H1 (cell line): ENCODE measurements at regions of chr2 and their contacts with region 1.

Region 1: GRCh38 chr2:199985625-199986207 is 30.3 kb downstream of the MAIP1 start:
- DNase-seq: peak; percentile 25 to 75
- H3K4me3 ChIP-seq: no peak overlapping the region
- H3K27ac ChIP-seq: no peak overlapping the region
- H3K4me1 ChIP-seq: peaks cover 0 to 16% (median 10%) of the 10 kb centered on the region in 4 experiments; a peak in 5 of 7 replicates
- H3K27me3 ChIP-seq: no peaks in the 10 kb centered on the region
- CTCF ChIP-seq: peak; percentile 65 to 96 (median 70)
- EP300 ChIP-seq: no peak
- POLR2A ChIP-seq: no peak
- RAD21 ChIP-seq: peak; percentile 79 to 83

Region 2: DNA sequence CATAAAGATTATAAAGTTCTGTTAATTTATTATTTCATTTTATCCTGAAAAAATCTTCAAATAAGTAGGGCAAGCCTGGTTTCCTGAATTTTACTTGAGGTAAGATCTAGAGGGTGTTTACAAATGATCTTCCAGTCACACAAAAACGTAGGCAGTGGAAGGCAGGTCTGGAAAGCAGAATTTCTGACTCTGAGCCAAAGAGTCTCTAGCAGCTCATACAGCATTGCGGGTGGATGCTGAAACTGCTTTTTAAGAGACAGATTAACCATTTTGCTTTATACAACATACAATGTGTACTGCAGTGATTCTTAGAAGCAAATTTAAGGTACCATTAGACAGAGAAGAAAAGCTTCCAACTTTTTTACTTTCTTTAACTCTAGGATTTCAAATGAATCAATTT is 251.7 kb before region 1 on chr2:
- CTCF ChIA-PET with region 1: no interaction called
- POLR2A ChIA-PET with region 1: no interaction called
- DNase-seq: no peak
- H3K4me3 ChIP-seq: no peak overlapping the region
- H3K27ac ChIP-seq: no peak overlapping the region
- H3K4me1 ChIP-seq: no peaks in the 10 kb centered on the region
- H3K27me3 ChIP-seq: no peaks in the 10 kb centered on the region
- CTCF ChIP-seq: no peak
- EP300 ChIP-seq: no peak
- POLR2A ChIP-seq: no peak
- RAD21 ChIP-seq: no peak

Region 3: DNA sequence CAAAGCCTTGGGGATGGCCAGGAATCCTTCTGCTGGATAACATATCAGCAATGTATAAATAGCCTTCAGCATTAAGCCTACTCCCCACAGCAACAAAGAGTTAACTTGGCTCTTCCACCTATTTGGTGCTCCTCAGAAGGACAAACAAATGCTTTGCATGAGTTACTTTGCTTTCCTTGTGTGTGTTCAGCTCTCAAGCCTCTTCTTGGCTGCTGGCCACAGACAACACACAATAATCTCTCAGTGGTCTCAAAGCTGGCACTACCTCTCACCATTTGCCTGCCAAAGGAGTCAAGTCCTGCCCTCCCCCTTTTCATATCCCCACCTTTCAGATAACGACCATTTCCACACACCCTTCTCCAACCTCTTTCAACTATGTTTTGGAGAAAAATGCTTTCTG is 152.2 kb before region 1 on chr2:
- CTCF ChIA-PET with region 1: no interaction called
- POLR2A ChIA-PET with region 1: no interaction called
- DNase-seq: no peak
- H3K4me3 ChIP-seq: no peak overlapping the region
- H3K27ac ChIP-seq: no peak overlapping the region
- H3K4me1 ChIP-seq: peaks cover 0 to 8% (median under 1%) of the 10 kb centered on the region in 4 experiments; a peak in 3 of 7 replicates
- H3K27me3 ChIP-seq: no peaks in the 10 kb centered on the region
- CTCF ChIP-seq: no peak
- EP300 ChIP-seq: no peak
- POLR2A ChIP-seq: no peak
- RAD21 ChIP-seq: no peak

Region 4: GRCh38 chr2:199955339-199956261 is 30.1 kb before region 1 on chr2 and contains the starts of genes MAIP1 and TYW5:
- CTCF ChIA-PET with region 1: no interaction called
- POLR2A ChIA-PET with region 1: no interaction called
- DNase-seq: peak; percentile 44 to 89
- H3K4me3 ChIP-seq: peak within 1 kb of the TSS; percentile 85 to 99 (median 92)
- H3K27ac ChIP-seq: peak within 1 kb of the TSS; percentile 99
- H3K4me1 ChIP-seq: peaks cover 0 to 7% (median 1%) of the 10 kb centered on the region in 4 experiments; a peak in 4 of 7 replicates
- H3K27me3 ChIP-seq: no peaks in the 10 kb centered on the region
- CTCF ChIP-seq: peak in 2 of 3 experiments; percentile 16 to 18; a peak in 2 of 4 replicates
- EP300 ChIP-seq: peak in 1 of 2 experiments; percentile 25; a peak in 1 of 3 replicates
- POLR2A ChIP-seq: peak; percentile 95 to 99
- RAD21 ChIP-seq: no peak
- total RNA-seq, gene MAIP1: 28.5 and 32.0 TPM in 2 replicates
- total RNA-seq, gene TYW5: 11.3 and 12.5 TPM in 2 replicates

Region 5: GRCh38 chr2:199973703-199974102 is 12.0 kb before region 1 on chr2:
- CTCF ChIA-PET with region 1: interaction called, 12 read pairs
- POLR2A ChIA-PET with region 1: interaction called, 4 read pairs
- DNase-seq: no peak
- H3K4me3 ChIP-seq: no peak overlapping the region
- H3K27ac ChIP-seq: no peak overlapping the region
- H3K4me1 ChIP-seq: no peaks in the 10 kb centered on the region
- H3K27me3 ChIP-seq: no peaks in the 10 kb centered on the region
- CTCF ChIP-seq: peak in 2 of 3 experiments; percentile 49 to 66; a peak in 2 of 4 replicates
- EP300 ChIP-seq: no peak
- POLR2A ChIP-seq: no peak
- RAD21 ChIP-seq: peak; percentile 94

Region 6: DNA sequence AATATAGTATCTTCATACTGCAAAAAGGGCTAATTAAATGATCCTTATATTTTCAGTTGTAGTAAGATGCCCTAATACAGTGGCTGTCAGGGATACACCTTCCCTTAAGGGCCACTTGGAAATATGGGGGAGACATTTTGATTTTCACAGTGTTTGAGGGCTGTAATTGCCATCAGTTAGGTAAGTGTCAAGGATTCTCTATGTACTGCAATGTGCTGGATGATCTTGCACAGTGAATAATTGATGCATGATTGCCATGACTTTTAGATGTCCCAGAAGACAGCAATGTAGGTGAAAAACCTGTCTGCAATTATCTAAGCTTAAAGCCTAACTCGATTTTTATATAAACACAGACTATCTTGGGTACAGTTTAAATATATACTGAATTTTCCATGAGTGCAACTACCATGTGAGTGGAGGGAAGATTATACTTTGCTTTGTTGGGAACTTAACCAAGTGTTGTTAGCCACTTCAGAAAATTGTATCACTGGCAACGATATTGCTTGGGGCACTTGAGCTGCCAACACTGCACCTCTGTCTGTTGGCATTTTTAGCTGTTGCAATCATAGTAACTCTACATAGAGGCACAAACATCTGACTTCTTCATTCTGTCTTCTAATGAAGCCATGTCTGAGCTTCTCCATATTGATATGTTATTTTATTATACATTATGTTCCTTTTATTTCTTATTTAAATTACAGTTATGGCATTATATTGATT is 14.9 kb after region 1 on chr2:
- CTCF ChIA-PET with region 1: interaction called, 15 read pairs
- POLR2A ChIA-PET with region 1: no interaction called
- DNase-seq: no peak
- H3K4me3 ChIP-seq: no peak overlapping the region
- H3K27ac ChIP-seq: no peak overlapping the region
- H3K4me1 ChIP-seq: peaks cover 2 to 9% (median 5%) of the 10 kb centered on the region in 4 experiments; a peak in 3 of 7 replicates
- H3K27me3 ChIP-seq: no peaks in the 10 kb centered on the region
- CTCF ChIP-seq: no peak
- EP300 ChIP-seq: no peak
- POLR2A ChIP-seq: no peak
- RAD21 ChIP-seq: no peak

Region 7: GRCh38 chr2:200416887-200417286 is 431.2 kb after region 1 on chr2:
- CTCF ChIA-PET with region 1: interaction called, 10 read pairs
- POLR2A ChIA-PET with region 1: no interaction called
- DNase-seq: no peak
- H3K4me3 ChIP-seq: no peak overlapping the region
- H3K27ac ChIP-seq: peak overlapping the region; percentile 51
- H3K4me1 ChIP-seq: peaks cover 0 to 11% (median 3%) of the 10 kb centered on the region in 4 experiments; a peak in 3 of 7 replicates
- H3K27me3 ChIP-seq: no peaks in the 10 kb centered on the region
- CTCF ChIP-seq: no peak
- EP300 ChIP-seq: no peak
- POLR2A ChIP-seq: no peak
- RAD21 ChIP-seq: no peak

Region 8: DNA sequence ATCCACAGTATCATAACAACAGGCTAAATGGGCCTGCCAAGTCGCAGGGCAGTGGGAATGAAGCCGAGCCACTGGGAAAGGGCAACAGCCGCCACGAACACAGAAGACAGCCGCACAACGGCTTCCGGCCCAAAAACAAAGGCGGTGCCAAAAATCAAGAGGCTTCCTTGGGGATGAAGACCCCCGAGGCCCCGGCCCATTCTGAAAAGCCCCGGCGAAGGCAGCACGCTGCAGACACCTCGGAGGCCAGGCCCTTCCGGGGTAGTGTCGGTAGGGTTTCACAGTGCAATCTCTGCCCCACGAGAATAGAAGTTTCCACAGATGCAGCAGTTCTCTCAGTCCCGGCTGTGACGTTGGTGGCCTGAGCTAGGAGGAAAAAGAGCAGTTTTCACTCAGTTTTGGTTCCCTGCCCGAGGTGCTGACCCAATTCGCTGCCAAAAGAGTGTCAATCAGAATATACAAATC is 492.0 kb after region 1 on chr2:
- CTCF ChIA-PET with region 1: interaction called, 20 read pairs
- POLR2A ChIA-PET with region 1: interaction called, 3 read pairs
- DNase-seq: no peak
- H3K4me3 ChIP-seq: no peak overlapping the region
- H3K27ac ChIP-seq: no peak overlapping the region
- H3K4me1 ChIP-seq: peaks cover 0 to 5% (median 3%) of the 10 kb centered on the region in 4 experiments; a peak in 3 of 7 replicates
- H3K27me3 ChIP-seq: no peaks in the 10 kb centered on the region
- CTCF ChIP-seq: no peak
- EP300 ChIP-seq: no peak
- POLR2A ChIP-seq: no peak
- RAD21 ChIP-seq: no peak